ENCODE measurements at regions of chr13 and their contacts with region 1.

Region 1: GRCh38 chr13:110615322-110616102 is at the start of gene NAXD:
- DNase-seq: peak; percentile 93
- H3K4me3 ChIP-seq: peak within 1 kb of the TSS; percentile 62 to 83 (median 70)
- H3K27ac ChIP-seq: peak within 1 kb of the TSS; percentile 52
- H3K4me1 ChIP-seq: peaks cover 28% of the 10 kb centered on the region
- H3K27me3 ChIP-seq: no peaks in the 10 kb centered on the region
- CTCF ChIP-seq: no peak
- total RNA-seq, gene NAXD: 18.3 to 27.0 TPM

Region 2: GRCh38 chr13:110216398-110217041 is 399.0 kb before region 1 on chr13:
- CTCF ChIA-PET with region 1: no interaction called
- dilution Hi-C with region 1: no loop called
- in situ Hi-C with region 1: loop called in 1 of 2 experiments (anchors 25 kb)
- intact Hi-C with region 1: loop called (anchors 5 kb)
- DNase-seq: no peak
- H3K4me3 ChIP-seq: no peak overlapping the region
- H3K27ac ChIP-seq: no peak overlapping the region
- H3K4me1 ChIP-seq: no peaks in the 10 kb centered on the region
- H3K27me3 ChIP-seq: no peaks in the 10 kb centered on the region
- CTCF ChIP-seq: no peak

Region 3: GRCh38 chr13:110561344-110562035 is 54.0 kb before region 1 on chr13 and contains the start of gene RAB20:
- CTCF ChIA-PET with region 1: no interaction called
- dilution Hi-C with region 1: no loop called
- in situ Hi-C with region 1: no loop called
- intact Hi-C with region 1: loop called (anchors 2 kb)
- DNase-seq: peak; percentile 76
- H3K4me3 ChIP-seq: peak within 1 kb of the TSS; percentile 78 to 92 (median 90)
- H3K27ac ChIP-seq: peak within 1 kb of the TSS; percentile 77
- H3K4me1 ChIP-seq: peaks cover 13% of the 10 kb centered on the region
- H3K27me3 ChIP-seq: no peaks in the 10 kb centered on the region
- CTCF ChIP-seq: no peak
- total RNA-seq, gene RAB20: 5.5 to 6.1 TPM

Region 4: GRCh38 chr13:111323950-111324651 is 708.6 kb after region 1 on chr13:
- CTCF ChIA-PET with region 1: no interaction called
- dilution Hi-C with region 1: no loop called
- in situ Hi-C with region 1: no loop called
- intact Hi-C with region 1: no loop called
- DNase-seq: no peak
- H3K4me3 ChIP-seq: no peak overlapping the region
- H3K27ac ChIP-seq: no peak overlapping the region
- H3K4me1 ChIP-seq: no peaks in the 10 kb centered on the region
- H3K27me3 ChIP-seq: no peaks in the 10 kb centered on the region
- CTCF ChIP-seq: no peak

Measured in mammary epithelial cell (primary cell).